Caco-2 (cell line): ENCODE measurements at regions of chr14 and their contacts with region 1.

Region 1: GRCh38 chr14:91755528-91756295 is 23.8 kb upstream of the CATSPERB start:
- DNase-seq: peak in 1 of 2 experiments; percentile 69
- H3K4me3 ChIP-seq: no peak overlapping the region
- H3K4me3 Mint-ChIP-seq: no peak overlapping the region
- H3K27ac Mint-ChIP-seq: peak overlapping the region; percentile 77
- H3K4me1 ChIP-seq: peaks cover 42% of the 10 kb centered on the region
- H3K4me1 Mint-ChIP-seq: peaks cover 15% of the 10 kb centered on the region
- H3K27me3 ChIP-seq: no peaks in the 10 kb centered on the region
- H3K27me3 Mint-ChIP-seq: no peaks in the 10 kb centered on the region
- CTCF ChIP-seq: no peak

Region 2: GRCh38 chr14:91439345-91439744 is 316.4 kb before region 1 on chr14:
- CTCF ChIA-PET with region 1: no interaction called
- POLR2A ChIA-PET with region 1: no interaction called
- intact Hi-C with region 1: no loop called
- DNase-seq: no peak
- H3K4me3 ChIP-seq: no peak overlapping the region
- H3K4me3 Mint-ChIP-seq: no peak overlapping the region
- H3K27ac Mint-ChIP-seq: no peak overlapping the region
- H3K4me1 ChIP-seq: no peaks in the 10 kb centered on the region
- H3K4me1 Mint-ChIP-seq: no peaks in the 10 kb centered on the region
- H3K27me3 ChIP-seq: no peaks in the 10 kb centered on the region
- H3K27me3 Mint-ChIP-seq: peaks cover 7% of the 10 kb centered on the region
- CTCF ChIP-seq: no peak

Region 3: GRCh38 chr14:91714805-91715204 is 40.9 kb before region 1 on chr14:
- CTCF ChIA-PET with region 1: no interaction called
- POLR2A ChIA-PET with region 1: no interaction called
- intact Hi-C with region 1: no loop called
- DNase-seq: peak in 1 of 2 experiments; percentile 27
- H3K4me3 ChIP-seq: no peak overlapping the region
- H3K4me3 Mint-ChIP-seq: no peak overlapping the region
- H3K27ac Mint-ChIP-seq: no peak overlapping the region
- H3K4me1 ChIP-seq: no peaks in the 10 kb centered on the region
- H3K4me1 Mint-ChIP-seq: no peaks in the 10 kb centered on the region
- H3K27me3 ChIP-seq: no peaks in the 10 kb centered on the region
- H3K27me3 Mint-ChIP-seq: peaks cover 2% of the 10 kb centered on the region
- CTCF ChIP-seq: peak; percentile 28 to 59

Region 4: DNA sequence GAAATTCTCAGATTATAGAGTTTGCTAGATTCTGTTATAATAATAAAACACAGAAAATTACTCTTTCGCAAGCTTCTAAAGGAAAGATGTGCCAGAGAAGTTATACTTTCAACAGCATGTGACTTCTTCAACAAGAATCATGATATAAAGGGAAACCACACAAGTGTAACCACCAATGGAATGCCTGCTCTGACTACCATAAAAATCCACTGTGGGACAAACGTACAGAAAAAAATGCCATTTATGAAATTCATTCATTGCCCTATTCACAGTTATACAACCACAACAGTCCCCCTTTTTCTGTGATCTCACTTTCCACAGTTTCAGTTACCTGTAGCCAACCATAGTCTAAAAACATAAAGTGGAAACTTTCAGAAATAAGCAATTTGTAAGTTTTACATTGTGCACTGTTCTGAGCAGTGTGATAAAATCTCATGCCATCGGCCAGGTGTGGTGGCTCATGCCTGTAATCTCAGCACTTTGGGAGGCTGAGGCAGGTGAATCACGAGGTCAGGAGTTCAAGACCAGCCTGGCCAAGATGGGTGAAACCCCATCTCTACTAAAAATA is 27.0 kb before region 1 on chr14:
- CTCF ChIA-PET with region 1: interaction called, 3 read pairs
- POLR2A ChIA-PET with region 1: no interaction called
- intact Hi-C with region 1: loop called (anchors 1 kb)
- DNase-seq: no peak
- H3K4me3 ChIP-seq: no peak overlapping the region
- H3K4me3 Mint-ChIP-seq: no peak overlapping the region
- H3K27ac Mint-ChIP-seq: no peak overlapping the region
- H3K4me1 ChIP-seq: peaks cover 23% of the 10 kb centered on the region
- H3K4me1 Mint-ChIP-seq: peaks cover 29% of the 10 kb centered on the region
- H3K27me3 ChIP-seq: no peaks in the 10 kb centered on the region
- H3K27me3 Mint-ChIP-seq: no peaks in the 10 kb centered on the region
- CTCF ChIP-seq: no peak

Region 5: DNA sequence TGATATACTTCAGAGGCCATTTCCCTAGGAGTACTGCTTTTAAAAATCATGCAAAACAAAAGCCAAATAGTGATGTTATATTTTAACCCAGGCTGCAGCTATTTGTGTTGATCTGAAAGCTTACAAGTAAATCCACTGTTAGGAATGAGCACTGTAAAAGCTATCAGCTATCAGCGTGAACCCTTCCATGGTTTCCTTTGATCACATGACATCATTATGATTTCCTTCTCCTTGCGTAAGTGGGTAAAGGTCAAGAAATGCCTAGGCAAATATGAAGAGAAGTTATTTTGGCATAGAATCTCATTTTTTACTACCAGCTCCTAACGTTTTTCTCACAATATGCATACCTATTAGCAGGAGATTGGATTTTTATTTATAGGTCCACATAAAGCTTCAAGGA is 24.7 kb after region 1 on chr14:
- CTCF ChIA-PET with region 1: interaction called, 4 read pairs
- POLR2A ChIA-PET with region 1: no interaction called
- intact Hi-C with region 1: loop called (anchors 1 kb)
- DNase-seq: peak in 1 of 2 experiments; percentile 63
- H3K4me3 ChIP-seq: no peak overlapping the region
- H3K4me3 Mint-ChIP-seq: peak overlapping the region; percentile 32
- H3K27ac Mint-ChIP-seq: no peak overlapping the region
- H3K4me1 ChIP-seq: peaks cover 21% of the 10 kb centered on the region
- H3K4me1 Mint-ChIP-seq: no peaks in the 10 kb centered on the region
- H3K27me3 ChIP-seq: no peaks in the 10 kb centered on the region
- H3K27me3 Mint-ChIP-seq: no peaks in the 10 kb centered on the region
- CTCF ChIP-seq: no peak